Caco-2 (cell line): ENCODE measurements at regions of chr5 and their contacts with region 1.

Region 1: GRCh38 chr5:36638056-36638455 is 31.6 kb downstream of the SLC1A3 start:
- DNase-seq: peak; percentile 78 to 90
- H3K4me3 ChIP-seq: no peak overlapping the region
- H3K4me3 Mint-ChIP-seq: peak overlapping the region; percentile 48
- H3K27ac Mint-ChIP-seq: peak overlapping the region; percentile 83
- H3K4me1 ChIP-seq: peaks cover 78% of the 10 kb centered on the region
- H3K4me1 Mint-ChIP-seq: peaks cover 68% of the 10 kb centered on the region
- H3K27me3 ChIP-seq: no peaks in the 10 kb centered on the region
- H3K27me3 Mint-ChIP-seq: no peaks in the 10 kb centered on the region
- CTCF ChIP-seq: no peak

Region 2: DNA sequence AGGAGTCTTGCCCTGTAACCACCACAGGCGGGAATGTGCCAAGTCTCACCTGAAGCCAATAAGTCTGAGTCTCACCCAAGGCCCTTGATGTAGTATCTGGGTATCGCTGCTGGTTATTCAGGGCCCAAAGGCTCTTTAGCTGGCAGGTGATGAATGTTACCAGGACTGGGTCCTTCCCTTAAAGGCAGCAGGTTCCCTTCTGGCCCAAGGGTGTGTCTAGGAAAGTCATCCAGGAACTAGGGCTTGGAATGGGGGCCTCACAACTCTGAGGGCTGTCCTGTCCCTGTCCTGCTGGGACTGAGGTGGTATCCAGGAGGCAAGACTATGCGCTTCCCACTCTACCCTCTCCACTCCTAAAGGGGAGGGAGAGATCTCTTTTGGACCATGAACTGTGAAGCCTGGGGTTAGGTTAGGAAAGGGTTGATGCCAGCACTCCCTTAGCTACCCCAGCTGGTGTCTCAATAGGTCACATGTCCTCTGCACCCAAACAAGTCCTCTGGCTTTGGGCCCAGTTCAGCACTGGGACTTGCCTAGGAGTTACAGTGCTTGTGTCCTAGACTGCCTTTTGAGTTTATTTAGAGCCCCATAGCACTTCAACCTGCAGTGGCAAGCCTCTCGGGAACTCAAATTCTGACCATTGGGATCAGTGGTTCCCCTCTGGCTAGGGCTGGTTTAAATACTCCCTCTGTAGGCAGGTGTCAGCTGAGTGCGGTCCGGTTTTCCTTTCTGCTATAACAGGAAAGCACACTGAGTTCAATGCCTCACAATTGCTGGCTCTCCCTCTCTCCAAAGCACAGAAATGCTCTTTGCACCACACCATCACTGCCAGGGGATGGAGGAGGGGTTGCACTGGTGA is 313.9 kb before region 1 on chr5:
- CTCF ChIA-PET with region 1: no interaction called
- POLR2A ChIA-PET with region 1: no interaction called
- intact Hi-C with region 1: no loop called
- DNase-seq: no peak
- H3K4me3 ChIP-seq: no peak overlapping the region
- H3K4me3 Mint-ChIP-seq: no peak overlapping the region
- H3K27ac Mint-ChIP-seq: no peak overlapping the region
- H3K4me1 ChIP-seq: no peaks in the 10 kb centered on the region
- H3K4me1 Mint-ChIP-seq: no peaks in the 10 kb centered on the region
- H3K27me3 ChIP-seq: no peaks in the 10 kb centered on the region
- H3K27me3 Mint-ChIP-seq: peaks cover 5% of the 10 kb centered on the region
- CTCF ChIP-seq: no peak

Region 3: DNA sequence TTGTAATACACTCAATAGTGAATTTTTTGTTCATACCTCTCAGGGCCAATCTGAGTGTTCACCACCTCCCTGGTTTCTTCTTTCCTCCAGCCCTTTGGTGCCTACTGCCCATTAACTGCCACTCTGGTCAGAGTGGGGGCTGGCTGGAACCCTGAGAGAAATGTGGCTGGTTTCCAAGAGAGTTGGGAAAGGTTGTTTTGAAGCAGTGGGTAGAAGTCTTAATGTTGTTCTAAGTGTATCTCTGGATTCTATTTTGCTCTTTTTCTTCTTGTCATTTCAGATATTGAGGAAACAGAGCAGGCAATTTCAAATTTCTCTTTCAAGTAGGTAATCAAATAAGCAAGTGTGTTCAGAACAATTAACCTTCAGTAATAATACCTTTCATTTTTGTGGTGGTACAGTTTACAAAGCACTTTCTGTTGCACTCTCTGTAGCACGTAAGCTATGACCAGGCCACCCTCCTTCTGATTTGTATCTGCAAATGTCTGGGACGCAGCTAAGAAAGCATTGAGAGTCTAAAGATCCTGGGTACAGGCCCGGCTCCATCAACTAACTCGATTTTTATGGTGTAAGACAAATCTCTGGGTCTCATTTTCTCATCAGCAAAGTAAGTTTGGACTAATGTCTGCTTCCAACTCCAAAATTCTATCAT is 23.3 kb before region 1 on chr5:
- CTCF ChIA-PET with region 1: no interaction called
- POLR2A ChIA-PET with region 1: interaction called, 3 read pairs
- intact Hi-C with region 1: loop called (anchors 1 kb)
- DNase-seq: no peak
- H3K4me3 ChIP-seq: no peak overlapping the region
- H3K4me3 Mint-ChIP-seq: no peak overlapping the region
- H3K27ac Mint-ChIP-seq: peak overlapping the region; percentile 88
- H3K4me1 ChIP-seq: peaks cover 59% of the 10 kb centered on the region
- H3K4me1 Mint-ChIP-seq: peaks cover 58% of the 10 kb centered on the region
- H3K27me3 ChIP-seq: no peaks in the 10 kb centered on the region
- H3K27me3 Mint-ChIP-seq: no peaks in the 10 kb centered on the region
- CTCF ChIP-seq: no peak

Region 4: GRCh38 chr5:36667812-36668211 is 29.8 kb after region 1 on chr5:
- CTCF ChIA-PET with region 1: no interaction called
- POLR2A ChIA-PET with region 1: interaction called, 3 read pairs
- intact Hi-C with region 1: loop called (anchors 1 kb)
- DNase-seq: peak; percentile 62 to 79
- H3K4me3 ChIP-seq: no peak overlapping the region
- H3K4me3 Mint-ChIP-seq: peak overlapping the region; percentile 15
- H3K27ac Mint-ChIP-seq: peak overlapping the region; percentile 55
- H3K4me1 ChIP-seq: peaks cover 60% of the 10 kb centered on the region
- H3K4me1 Mint-ChIP-seq: peaks cover 33% of the 10 kb centered on the region
- H3K27me3 ChIP-seq: no peaks in the 10 kb centered on the region
- H3K27me3 Mint-ChIP-seq: no peaks in the 10 kb centered on the region
- CTCF ChIP-seq: no peak

Region 5: DNA sequence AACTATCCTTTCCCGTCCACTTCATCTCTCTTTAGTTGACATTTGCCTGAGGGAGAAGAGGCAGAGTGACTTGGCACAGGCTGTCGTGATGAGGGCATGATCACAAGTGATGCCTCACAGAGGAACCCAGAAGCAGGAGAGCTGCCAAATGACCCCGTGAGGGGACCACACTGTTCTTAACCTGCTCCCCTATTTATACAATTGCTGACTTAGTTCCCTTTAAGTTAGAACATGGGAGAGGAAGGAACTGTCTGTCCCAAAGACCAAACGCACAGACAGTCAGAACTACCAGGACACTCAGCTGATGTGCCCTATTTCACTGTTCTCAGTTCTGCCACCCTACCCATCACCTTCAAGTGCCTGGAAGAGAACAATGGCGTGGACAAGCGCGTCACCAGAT is 42.0 kb after region 1 on chr5:
- CTCF ChIA-PET with region 1: no interaction called
- POLR2A ChIA-PET with region 1: no interaction called
- intact Hi-C with region 1: no loop called
- DNase-seq: no peak
- H3K4me3 ChIP-seq: no peak overlapping the region
- H3K4me3 Mint-ChIP-seq: no peak overlapping the region
- H3K27ac Mint-ChIP-seq: peak overlapping the region; percentile 53
- H3K4me1 ChIP-seq: no peaks in the 10 kb centered on the region
- H3K4me1 Mint-ChIP-seq: peaks cover 13% of the 10 kb centered on the region
- H3K27me3 ChIP-seq: no peaks in the 10 kb centered on the region
- H3K27me3 Mint-ChIP-seq: no peaks in the 10 kb centered on the region
- CTCF ChIP-seq: no peak

Region 6: DNA sequence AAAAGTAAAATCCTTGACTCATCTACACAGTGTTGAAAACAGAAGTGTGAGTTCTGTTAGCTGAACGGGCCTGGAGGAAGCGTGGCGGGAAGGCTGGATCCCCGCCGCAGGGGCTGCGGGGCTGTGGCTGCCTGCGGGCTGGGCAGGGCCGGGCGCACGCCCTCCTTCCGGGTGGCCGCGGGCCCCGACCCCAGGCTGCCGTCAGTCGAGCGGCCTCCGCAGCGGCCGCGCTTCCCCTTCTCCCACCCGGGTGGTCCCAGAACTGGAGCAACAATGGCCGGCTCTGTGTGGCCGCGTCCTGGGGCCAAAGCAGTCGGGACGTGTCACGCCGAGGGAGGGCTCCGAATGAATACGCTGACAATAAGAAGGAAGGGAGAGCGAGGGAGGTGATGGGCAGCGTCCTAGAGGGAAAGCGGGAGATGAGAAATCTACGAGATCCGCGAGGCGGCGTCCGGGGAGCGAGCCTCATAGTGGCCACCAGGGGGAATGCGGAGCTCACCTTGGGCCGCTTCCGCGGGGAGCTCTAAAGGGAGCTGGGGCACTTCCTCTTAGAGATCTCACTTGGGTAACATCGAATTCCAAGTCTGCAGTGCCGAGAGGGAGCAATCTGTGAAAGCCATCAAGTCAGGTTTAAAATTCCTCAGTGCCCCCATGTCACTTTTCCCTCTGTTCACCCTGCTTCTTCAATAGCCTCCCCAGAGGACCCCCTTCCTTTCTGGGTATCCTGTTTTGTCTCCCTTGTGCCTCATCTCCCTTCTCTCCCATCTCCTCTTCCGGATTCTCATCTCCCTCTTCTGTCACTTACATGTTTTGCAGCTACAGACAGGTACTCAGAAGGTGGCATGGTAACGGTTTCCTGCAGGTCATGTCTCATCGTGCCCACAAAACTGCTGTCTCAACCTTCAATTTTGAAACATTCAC is 52.2 kb after region 1 on chr5:
- CTCF ChIA-PET with region 1: interaction called, 8 read pairs
- POLR2A ChIA-PET with region 1: no interaction called
- intact Hi-C with region 1: loop called (anchors 2 kb)
- DNase-seq: peak; percentile 90 to 91
- H3K4me3 ChIP-seq: peak overlapping the region; percentile 71
- H3K4me3 Mint-ChIP-seq: peak overlapping the region; percentile 75
- H3K27ac Mint-ChIP-seq: peak overlapping the region; percentile 28
- H3K4me1 ChIP-seq: peaks cover 14% of the 10 kb centered on the region; the same call in 1 of the 2 replicates
- H3K4me1 Mint-ChIP-seq: peaks cover 10% of the 10 kb centered on the region
- H3K27me3 ChIP-seq: no peaks in the 10 kb centered on the region
- H3K27me3 Mint-ChIP-seq: no peaks in the 10 kb centered on the region
- CTCF ChIP-seq: peak; percentile 80 to 91